ENCODE measurements at regions of chr4 and their contacts with region 1.

Region 1: DNA sequence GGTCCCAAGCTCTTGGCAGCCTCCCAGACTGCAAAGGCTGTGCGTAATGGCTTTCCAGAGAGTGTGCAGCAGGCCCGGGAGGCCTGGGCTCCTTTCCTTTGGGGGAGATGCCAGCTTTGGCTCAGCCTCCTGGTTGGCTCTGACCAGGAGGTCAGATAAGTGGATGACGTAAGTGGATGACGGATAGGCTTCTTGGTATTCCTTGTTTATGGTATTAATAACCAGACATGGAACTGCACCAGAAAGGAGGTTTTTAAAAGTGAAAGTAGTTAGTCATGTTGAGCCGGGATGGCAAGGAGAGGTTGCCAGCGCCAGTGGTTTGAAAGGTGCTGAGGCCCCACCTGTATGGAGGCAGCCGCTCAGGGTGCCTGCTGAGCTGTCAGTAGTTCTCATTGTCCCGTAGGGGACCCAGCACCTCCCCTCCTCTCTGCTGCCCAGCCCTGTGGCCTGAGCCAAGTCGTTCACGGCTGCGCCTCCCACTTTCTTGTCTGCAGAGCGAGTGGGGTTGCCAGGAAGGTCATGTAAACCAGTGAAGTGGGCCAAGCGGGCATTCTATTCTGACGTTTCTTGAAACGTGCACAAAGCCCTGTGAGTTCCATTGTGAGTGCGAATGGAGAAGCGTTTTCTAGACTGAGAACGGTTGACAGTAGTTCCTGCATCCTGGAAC is 28.7 kb upstream of the STOX2 start:
- DNase-seq: peak; percentile 63
- H3K4me3 ChIP-seq: peak overlapping the region in 3 of 4 donors; percentile 29 to 39 (median 39)
- H3K27ac ChIP-seq: peak overlapping the region; percentile 55 to 79 (median 66)
- H3K4me1 ChIP-seq: peaks cover 0 to 12% (median 8%) of the 10 kb centered on the region in 4 donors
- H3K27me3 ChIP-seq: no peaks in the 10 kb centered on the region
- CTCF ChIP-seq: no peak
- EP300 ChIP-seq: peak; percentile 78
- POLR2A ChIP-seq: no peak

Region 2: GRCh38 chr4:183987987-183988392 is 111.6 kb after region 1 on chr4:
- in situ Hi-C with region 1: no loop called
- intact Hi-C with region 1: loop called (anchors 10 kb)
- DNase-seq: peak; percentile 61
- H3K4me3 ChIP-seq: peak overlapping the region in 3 of 4 donors; percentile 19 to 45 (median 24)
- H3K27ac ChIP-seq: peak overlapping the region; percentile 65 to 80 (median 74)
- H3K4me1 ChIP-seq: peaks cover 0 to 13% (median 8%) of the 10 kb centered on the region in 4 donors
- H3K27me3 ChIP-seq: no peaks in the 10 kb centered on the region
- CTCF ChIP-seq: no peak
- EP300 ChIP-seq: no peak
- POLR2A ChIP-seq: peak; percentile 8